Activated T-helper 1 cell treated with anti-CD3 and anti-CD28 coated beads, Interleukin-12 subunit alpha, Interleukin-12 subunit beta, Interleukin-2, Interleukin-4 antibody, amounts not matched to agents 30 ng/mL and 10 ng/mL and 1 ng/mL, durations not matched to agents 14 hours and 24 hours and 36 hours (primary cell): ENCODE measurements at regions of chr1 and their contacts with region 1.

Region 1: DNA sequence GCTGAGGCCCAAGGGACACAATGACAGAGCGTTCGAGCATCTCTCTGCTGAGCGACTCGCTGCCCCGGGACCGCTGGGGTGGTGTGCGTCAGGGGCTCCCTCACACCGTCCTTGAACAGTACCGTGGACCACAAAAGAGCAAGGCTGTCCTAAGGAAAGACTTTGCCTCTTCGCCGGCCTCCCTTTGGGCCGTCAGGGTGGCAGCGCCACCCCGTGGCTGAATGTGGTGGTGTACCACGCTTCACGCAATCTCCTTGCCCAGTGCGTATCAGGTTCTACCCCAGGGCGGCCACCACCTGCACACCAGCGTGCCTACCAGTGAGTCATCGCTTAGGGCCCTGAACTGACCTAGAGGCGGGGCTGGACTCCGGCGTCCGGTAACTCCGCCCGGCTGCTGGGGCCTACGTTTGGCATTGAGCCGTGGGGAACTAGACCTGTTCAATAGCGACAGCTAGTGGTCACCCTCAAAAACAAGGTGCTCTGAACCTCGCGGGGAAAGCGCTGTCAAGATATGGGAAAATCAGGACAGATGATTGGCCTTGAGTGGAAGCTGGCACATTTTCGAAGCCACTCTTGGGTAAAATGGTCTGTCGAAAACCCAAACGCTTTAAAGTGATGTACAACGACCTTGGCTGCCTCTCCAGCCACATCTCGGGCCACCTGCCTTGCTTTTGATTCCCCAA is 8.1 kb upstream of the TRAF3IP3 start:
- DNase-seq: peak; percentile 78
- H3K4me3 Mint-ChIP-seq: peak overlapping the region; percentile 69
- H3K27ac Mint-ChIP-seq: peak overlapping the region; percentile 90
- H3K4me1 Mint-ChIP-seq: peaks cover 75% of the 10 kb centered on the region
- H3K27me3 Mint-ChIP-seq: no peaks in the 10 kb centered on the region

Region 2: GRCh38 chr1:209565759-209566678 is 181.7 kb before region 1 on chr1:
- intact Hi-C with region 1: loop called (anchors 1 kb)
- DNase-seq: peak; percentile 66
- H3K4me3 Mint-ChIP-seq: no peak overlapping the region
- H3K27ac Mint-ChIP-seq: no peak overlapping the region
- H3K4me1 Mint-ChIP-seq: peaks cover 27% of the 10 kb centered on the region
- H3K27me3 Mint-ChIP-seq: peaks cover 41% of the 10 kb centered on the region

Region 3: DNA sequence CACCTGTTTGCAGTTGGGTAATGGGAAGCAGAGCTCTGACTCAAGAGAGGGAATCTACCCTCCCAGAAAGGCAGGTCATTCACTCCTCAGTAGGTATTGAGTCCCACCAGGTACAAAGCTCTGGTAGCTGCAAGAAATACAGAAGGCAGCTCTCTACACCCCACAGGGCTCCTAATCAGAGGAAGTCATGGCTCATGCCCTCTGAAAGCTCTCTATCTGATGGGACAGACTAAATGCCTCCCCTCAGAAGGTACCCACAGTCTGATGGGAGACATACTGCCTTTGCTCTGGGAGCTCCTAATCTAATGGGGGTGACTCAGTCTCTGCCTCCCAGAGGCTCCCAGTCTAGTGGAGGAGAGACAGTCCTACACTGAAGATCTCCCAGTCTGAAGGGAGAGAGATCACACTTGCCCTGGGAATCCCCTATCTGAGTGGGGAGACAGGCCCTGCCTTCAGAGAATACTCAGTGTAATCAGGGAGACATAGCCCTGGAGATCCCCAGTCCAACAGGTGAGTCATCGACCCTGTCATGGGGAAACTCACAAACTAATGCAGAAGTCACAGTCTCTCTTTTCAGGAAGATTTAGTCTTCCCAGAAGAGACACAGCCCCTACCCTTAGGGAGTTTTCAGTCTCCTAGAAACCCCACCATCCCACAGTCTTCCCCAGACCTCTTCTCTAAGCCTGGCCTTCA is 140.5 kb before region 1 on chr1:
- intact Hi-C with region 1: loop called (anchors 1 kb)
- DNase-seq: peak; percentile 39
- H3K4me3 Mint-ChIP-seq: no peak overlapping the region
- H3K27ac Mint-ChIP-seq: peak overlapping the region; percentile 66
- H3K4me1 Mint-ChIP-seq: peaks cover 15% of the 10 kb centered on the region
- H3K27me3 Mint-ChIP-seq: no peaks in the 10 kb centered on the region

Region 4: GRCh38 chr1:209674957-209675564 is 72.7 kb before region 1 on chr1 and contains the start of gene G0S2:
- intact Hi-C with region 1: loop called (anchors 1 kb)
- DNase-seq: peak; percentile 59
- H3K4me3 Mint-ChIP-seq: peak within 1 kb of the TSS; percentile 92
- H3K27ac Mint-ChIP-seq: peak within 1 kb of the TSS; percentile 94
- H3K4me1 Mint-ChIP-seq: peaks cover 87% of the 10 kb centered on the region
- H3K27me3 Mint-ChIP-seq: peaks cover 2% of the 10 kb centered on the region
- total RNA-seq, gene G0S2: 501 and 509 TPM in 2 replicates

Region 5: GRCh38 chr1:209710093-209710492 is 37.6 kb before region 1 on chr1:
- intact Hi-C with region 1: loop called (anchors 2 kb)
- DNase-seq: no peak
- H3K4me3 Mint-ChIP-seq: peak overlapping the region; percentile 31
- H3K27ac Mint-ChIP-seq: peak overlapping the region; percentile 85
- H3K4me1 Mint-ChIP-seq: peaks cover 72% of the 10 kb centered on the region
- H3K27me3 Mint-ChIP-seq: no peaks in the 10 kb centered on the region

Region 6: DNA sequence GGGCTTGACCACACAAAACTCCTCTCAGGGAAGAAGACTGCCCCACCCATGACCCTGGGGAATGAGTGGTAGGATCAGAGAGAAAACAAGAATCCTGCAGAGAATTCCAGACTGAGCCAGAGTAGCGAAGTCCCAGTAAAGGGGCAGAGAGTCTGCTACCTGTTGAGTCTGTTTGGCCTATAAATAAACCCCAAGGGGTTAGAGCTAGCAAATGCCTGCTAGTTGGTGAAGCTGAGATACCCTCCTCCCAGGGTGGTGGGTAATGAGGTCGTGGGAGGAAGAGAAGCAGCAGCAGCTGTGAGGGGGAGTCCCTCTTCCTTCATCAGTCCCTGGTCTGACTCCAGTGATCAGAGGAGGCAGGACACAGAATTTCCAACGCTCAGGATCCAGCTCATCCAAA is 10.7 kb after region 1 on chr1:
- intact Hi-C with region 1: no loop called
- DNase-seq: no peak
- H3K4me3 Mint-ChIP-seq: peak overlapping the region; percentile 99
- H3K27ac Mint-ChIP-seq: peak overlapping the region; percentile 98
- H3K4me1 Mint-ChIP-seq: peaks cover 80% of the 10 kb centered on the region
- H3K27me3 Mint-ChIP-seq: no peaks in the 10 kb centered on the region

Region 7: GRCh38 chr1:209769171-209769904 is 21.6 kb after region 1 on chr1:
- intact Hi-C with region 1: loop called (anchors 1 kb)
- DNase-seq: peak; percentile 75
- H3K4me3 Mint-ChIP-seq: no peak overlapping the region
- H3K27ac Mint-ChIP-seq: no peak overlapping the region
- H3K4me1 Mint-ChIP-seq: peaks cover 39% of the 10 kb centered on the region
- H3K27me3 Mint-ChIP-seq: no peaks in the 10 kb centered on the region

Region 8: DNA sequence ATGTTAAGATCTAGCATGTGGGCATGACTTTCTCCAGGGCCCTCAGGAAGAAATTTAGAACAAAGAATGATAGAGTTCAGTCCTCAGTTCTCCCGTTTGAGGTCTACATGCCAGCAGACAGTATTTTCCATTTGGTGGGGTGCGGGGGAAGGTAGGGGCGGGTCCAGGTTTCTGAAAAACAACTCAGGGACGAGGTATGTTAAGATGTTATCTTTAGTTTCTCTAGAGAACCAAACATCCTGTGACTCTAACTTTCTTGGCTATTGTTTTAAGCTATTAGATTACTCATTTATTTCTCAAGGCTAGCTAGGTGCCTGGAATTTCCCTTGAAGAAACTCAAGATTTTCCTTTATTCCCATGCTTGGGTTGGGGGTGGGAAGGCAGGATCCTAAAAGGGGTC is 148.0 kb after region 1 on chr1:
- intact Hi-C with region 1: no loop called
- DNase-seq: no peak
- H3K4me3 Mint-ChIP-seq: no peak overlapping the region
- H3K27ac Mint-ChIP-seq: no peak overlapping the region
- H3K4me1 Mint-ChIP-seq: peaks cover 13% of the 10 kb centered on the region
- H3K27me3 Mint-ChIP-seq: peaks cover 2% of the 10 kb centered on the region